MCF 10A (cell line): ENCODE measurements at regions of chr17 and their contacts with region 1.

Region 1: GRCh38 chr17:38868817-38869525 is 887 bp upstream of the LASP1 start:
- DNase-seq: peak; percentile 87
- H3K4me3 Mint-ChIP-seq: peak overlapping the region; percentile 89
- H3K27ac Mint-ChIP-seq: peak overlapping the region; percentile 80
- H3K4me1 Mint-ChIP-seq: peaks cover 38% of the 10 kb centered on the region
- H3K27me3 Mint-ChIP-seq: no peaks in the 10 kb centered on the region
- CTCF ChIP-seq: no peak

Region 2: DNA sequence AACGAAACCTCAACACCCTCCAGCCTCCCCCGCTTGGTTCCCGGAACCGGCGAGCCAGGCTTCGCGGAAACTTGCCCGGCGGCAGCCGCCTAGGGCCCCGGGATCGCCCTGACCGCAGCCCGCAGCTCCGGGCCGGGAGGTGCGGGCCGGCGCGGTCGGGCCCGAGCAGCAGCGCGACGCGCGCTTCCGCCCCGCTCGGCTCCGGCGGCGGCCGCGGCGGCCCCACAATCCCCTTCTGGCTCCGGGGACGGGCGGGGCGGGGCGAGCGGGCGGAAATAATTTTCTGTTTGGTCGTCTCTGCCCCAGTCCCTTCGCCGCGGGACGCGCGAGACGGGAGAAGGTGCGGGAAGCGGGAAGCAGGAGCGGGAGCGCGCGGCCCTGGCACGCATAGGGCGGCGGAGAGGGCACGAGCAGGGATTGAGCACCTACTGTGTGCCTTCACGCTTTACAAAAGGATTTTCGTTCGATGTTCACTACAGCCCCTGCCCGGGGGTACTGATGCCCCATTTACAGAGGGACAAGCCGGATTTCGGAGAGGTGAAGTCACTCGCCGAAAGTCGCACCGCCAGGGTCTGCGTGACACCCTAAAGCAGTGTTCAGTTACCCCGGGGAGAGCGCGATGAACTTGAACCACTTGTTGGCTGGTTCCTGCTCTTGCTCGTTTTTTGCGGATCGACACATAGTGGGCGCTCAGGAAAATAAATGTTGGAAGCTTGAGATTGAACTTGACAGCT is 166.6 kb before region 1 on chr17:
- CTCF ChIA-PET with region 1: no interaction called
- POLR2A ChIA-PET with region 1: interaction called, 12 read pairs
- intact Hi-C with region 1: no loop called
- DNase-seq: peak; percentile 88
- H3K4me3 Mint-ChIP-seq: peak overlapping the region; percentile 99
- H3K27ac Mint-ChIP-seq: peak overlapping the region; percentile 75
- H3K4me1 Mint-ChIP-seq: peaks cover 17% of the 10 kb centered on the region
- H3K27me3 Mint-ChIP-seq: peaks cover 10% of the 10 kb centered on the region
- CTCF ChIP-seq: no peak

Region 3: DNA sequence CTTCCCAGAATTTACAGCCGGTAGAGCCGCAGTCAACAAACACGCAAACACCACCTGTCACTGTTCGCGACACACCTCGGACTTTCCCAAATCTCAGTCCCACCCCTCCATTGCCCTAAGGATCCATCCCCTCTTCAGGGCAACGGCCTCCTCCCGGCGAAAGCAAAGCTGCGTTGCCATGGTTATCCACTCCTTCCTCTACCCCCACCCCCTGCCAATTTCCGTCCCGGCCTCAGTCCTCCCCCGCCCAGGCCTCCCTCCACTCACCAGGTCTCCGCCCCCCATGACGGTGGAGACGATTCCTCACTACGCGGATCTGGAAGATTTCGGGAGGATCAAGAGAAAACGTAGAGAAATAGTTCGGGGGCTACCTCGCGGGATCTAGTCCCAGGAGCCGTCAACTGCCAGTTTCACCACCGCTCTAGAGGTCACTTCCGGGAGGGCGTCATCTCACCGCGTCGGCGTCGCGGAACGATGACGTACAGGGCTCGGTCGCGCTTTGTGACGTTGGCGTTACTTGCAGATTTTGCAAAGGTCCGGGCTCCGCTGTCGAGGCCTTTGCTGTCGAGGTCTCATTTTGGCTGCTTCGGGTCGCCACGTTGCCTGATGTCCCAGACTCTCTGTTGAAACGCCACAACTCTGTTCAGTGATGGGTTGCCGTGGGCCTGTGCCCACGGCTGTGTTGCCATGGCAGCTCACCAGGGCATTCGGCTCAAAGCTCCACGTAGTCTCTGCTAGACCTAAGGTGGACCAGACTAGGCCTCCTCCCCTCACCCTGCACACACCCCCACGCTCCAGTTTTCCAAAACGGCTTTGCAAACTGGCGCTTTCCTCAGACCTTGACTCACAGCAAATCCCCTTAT is 43.8 kb before region 1 on chr17 and contains the start of gene CWC25:
- CTCF ChIA-PET with region 1: no interaction called
- POLR2A ChIA-PET with region 1: interaction called, 29 read pairs
- intact Hi-C with region 1: no loop called
- DNase-seq: peak; percentile 92
- H3K4me3 Mint-ChIP-seq: peak within 1 kb of the TSS; percentile 98
- H3K27ac Mint-ChIP-seq: peak within 1 kb of the TSS; percentile 100
- H3K4me1 Mint-ChIP-seq: no peaks in the 10 kb centered on the region
- H3K27me3 Mint-ChIP-seq: no peaks in the 10 kb centered on the region
- CTCF ChIP-seq: no peak
- total RNA-seq, gene CWC25: 21.9 and 23.4 TPM in 2 replicates

Region 4: GRCh38 chr17:38900978-38901656 is 32.1 kb after region 1 on chr17:
- CTCF ChIA-PET with region 1: interaction called, 4 read pairs
- POLR2A ChIA-PET with region 1: interaction called, 4 read pairs
- intact Hi-C with region 1: loop called (anchors 2 kb)
- DNase-seq: peak; percentile 96
- H3K4me3 Mint-ChIP-seq: peak overlapping the region; percentile 25
- H3K27ac Mint-ChIP-seq: peak overlapping the region; percentile 54
- H3K4me1 Mint-ChIP-seq: peaks cover 8% of the 10 kb centered on the region
- H3K27me3 Mint-ChIP-seq: no peaks in the 10 kb centered on the region
- CTCF ChIP-seq: no peak

Region 5: DNA sequence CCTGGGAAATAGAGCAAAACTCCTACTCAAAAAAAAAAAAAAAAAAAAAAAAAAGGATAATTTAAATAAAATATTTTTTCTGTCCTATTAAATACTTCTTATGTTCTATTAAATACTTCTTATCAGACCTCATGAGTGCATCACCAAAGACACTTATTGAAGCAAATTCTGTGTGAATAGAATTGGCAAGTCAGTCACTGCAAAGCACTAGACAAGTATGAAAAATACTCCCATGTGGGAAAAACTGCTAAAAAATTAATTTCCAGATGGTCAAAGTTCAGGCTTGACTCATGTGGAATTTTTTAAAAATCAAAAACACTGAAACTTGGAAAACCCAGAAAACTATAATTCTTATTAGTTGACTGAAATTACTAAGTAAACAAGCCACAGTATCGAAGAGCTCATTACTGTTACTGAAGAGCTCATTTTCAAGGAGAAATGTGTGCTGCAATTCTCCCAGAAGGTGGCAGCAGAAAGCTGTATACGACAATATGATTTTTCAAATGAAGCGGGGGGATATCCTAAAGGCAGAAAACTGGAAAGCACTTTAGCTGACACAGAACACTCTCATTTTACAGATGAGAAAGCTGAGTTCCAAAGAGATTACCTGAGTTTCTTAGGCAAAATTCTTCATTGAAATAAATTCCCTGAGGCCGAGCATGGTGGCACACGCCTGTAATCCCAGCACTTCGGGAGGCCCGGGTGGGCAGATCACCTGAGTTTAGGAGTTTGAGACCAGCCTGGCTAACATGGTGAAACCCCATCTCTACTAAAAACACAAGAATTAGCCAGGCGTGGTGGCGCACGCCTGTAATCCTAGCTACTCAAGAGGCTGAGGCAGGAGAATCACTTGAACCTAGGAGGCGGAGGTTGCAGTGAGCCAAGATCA is 114.1 kb after region 1 on chr17:
- CTCF ChIA-PET with region 1: interaction called, 6 read pairs
- POLR2A ChIA-PET with region 1: interaction called, 5 read pairs
- intact Hi-C with region 1: loop called (anchors 2 kb)
- DNase-seq: peak; percentile 68
- H3K4me3 Mint-ChIP-seq: no peak overlapping the region
- H3K27ac Mint-ChIP-seq: no peak overlapping the region
- H3K4me1 Mint-ChIP-seq: no peaks in the 10 kb centered on the region
- H3K27me3 Mint-ChIP-seq: no peaks in the 10 kb centered on the region
- CTCF ChIP-seq: peak; percentile 92